Activated CD4-positive, alpha-beta memory T cell treated with anti-CD3 and anti-CD28 coated beads for 36 hours (primary cell): ENCODE measurements at regions of chr12 and their contacts with region 1.

Region 1: DNA sequence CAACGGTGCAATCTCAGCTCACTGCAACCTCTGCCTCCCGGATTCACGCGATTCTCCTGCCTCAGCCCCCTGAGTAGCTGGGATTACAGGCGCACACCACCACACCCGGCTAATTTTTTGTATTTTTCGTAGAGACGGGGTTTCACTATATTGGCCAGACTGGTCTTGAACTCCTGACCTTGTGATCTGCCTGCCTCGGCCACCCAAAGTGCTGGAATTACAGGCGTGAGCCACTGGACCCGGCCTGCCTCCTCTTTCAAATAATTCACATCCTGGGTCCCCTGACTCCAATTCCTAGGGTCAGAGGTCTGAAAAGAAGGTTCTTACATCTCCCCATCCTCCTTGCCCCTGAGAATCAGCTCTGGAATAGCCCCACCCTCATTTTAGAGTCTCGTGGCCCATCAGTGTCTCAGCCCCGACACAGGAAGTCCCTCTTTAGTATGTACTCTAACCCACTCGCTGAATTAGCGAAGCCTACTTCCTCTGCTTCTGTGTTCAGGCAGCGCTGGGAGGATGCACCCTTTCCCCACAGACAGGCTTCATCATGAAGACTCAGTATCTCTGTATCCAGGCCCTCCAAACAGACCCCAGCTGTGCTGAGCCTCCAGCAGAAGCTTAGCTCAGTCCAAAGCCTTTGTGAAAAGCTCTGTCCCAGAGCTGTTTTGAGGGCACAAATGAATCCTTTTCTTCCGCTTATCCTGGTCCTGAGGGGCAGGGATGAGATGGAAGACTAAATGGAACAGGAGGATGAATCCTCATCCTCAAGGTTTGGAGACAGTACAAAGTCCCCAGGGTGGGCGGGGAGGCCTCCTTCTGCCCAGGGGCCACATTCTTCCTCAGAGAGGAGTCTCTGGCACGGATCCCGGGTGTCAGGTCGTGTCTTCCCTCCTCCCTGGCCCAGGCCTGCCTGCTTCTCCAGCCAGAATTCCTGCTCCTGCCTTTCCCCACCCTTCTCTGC is 3.5 kb downstream of the LPAR5 start:
- DNase-seq: peak; percentile 69
- H3K4me3 Mint-ChIP-seq: peak overlapping the region; percentile 73
- H3K27ac Mint-ChIP-seq: peak overlapping the region; percentile 91
- H3K4me1 Mint-ChIP-seq: peaks cover 53% of the 10 kb centered on the region
- H3K27me3 Mint-ChIP-seq: no peaks in the 10 kb centered on the region

Region 2: GRCh38 chr12:6553051-6553868 is 79.0 kb before region 1 on chr12:
- CTCF ChIA-PET with region 1: no interaction called
- POLR2A ChIA-PET with region 1: no interaction called
- intact Hi-C with region 1: no loop called
- DNase-seq: no peak
- H3K4me3 Mint-ChIP-seq: peak overlapping the region; percentile 48
- H3K27ac Mint-ChIP-seq: no peak overlapping the region
- H3K4me1 Mint-ChIP-seq: peaks cover 38% of the 10 kb centered on the region
- H3K27me3 Mint-ChIP-seq: no peaks in the 10 kb centered on the region

Region 3: DNA sequence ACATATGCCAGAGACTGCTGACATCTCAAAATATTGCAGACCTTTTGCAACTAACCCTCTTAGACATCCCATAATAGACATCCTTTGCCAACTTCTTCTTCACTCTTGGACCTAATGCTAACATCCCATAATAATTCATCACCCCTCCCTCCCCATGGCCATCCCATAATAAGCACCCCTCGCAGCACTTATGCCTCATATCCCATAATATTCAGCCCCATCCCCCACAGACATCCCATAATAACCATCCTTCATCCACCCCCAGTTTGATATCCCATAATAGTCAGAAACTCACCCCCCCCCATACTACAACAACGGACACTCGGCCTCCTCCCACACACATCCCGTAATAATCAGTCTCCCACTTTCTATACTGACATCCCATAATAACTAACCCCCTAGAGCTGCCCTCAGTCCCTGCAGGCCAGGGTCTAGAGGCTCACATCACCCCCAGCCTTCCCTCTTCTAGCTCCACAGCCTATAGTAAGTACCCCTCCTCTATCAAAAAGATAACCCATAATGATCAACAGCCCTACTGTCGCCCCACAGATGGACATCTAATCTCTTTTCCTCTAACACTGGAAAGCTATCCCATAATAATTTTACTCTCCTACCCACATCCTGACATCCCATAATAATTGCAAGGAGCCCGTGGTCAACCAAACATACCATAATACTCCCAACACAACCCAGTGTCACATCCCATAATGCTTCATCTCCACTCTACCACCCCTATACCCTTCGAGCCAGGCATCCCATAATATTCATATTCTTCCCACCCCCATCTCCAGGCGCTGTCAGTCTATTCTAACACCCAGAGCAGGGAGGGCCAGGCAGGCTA is 24.3 kb before region 1 on chr12:
- CTCF ChIA-PET with region 1: interaction called, 4 read pairs
- POLR2A ChIA-PET with region 1: interaction called, 3 read pairs
- intact Hi-C with region 1: loop called (anchors 2 kb)
- DNase-seq: peak; percentile 82
- H3K4me3 Mint-ChIP-seq: no peak overlapping the region
- H3K27ac Mint-ChIP-seq: no peak overlapping the region
- H3K4me1 Mint-ChIP-seq: peaks cover 53% of the 10 kb centered on the region
- H3K27me3 Mint-ChIP-seq: no peaks in the 10 kb centered on the region

Region 4: GRCh38 chr12:6613776-6614512 is 18.4 kb before region 1 on chr12:
- CTCF ChIA-PET with region 1: interaction called, 5 read pairs
- POLR2A ChIA-PET with region 1: no interaction called
- intact Hi-C with region 1: loop called (anchors 2 kb)
- DNase-seq: peak; percentile 45
- H3K4me3 Mint-ChIP-seq: no peak overlapping the region
- H3K27ac Mint-ChIP-seq: peak overlapping the region; percentile 38
- H3K4me1 Mint-ChIP-seq: peaks cover 38% of the 10 kb centered on the region
- H3K27me3 Mint-ChIP-seq: no peaks in the 10 kb centered on the region

Region 5: DNA sequence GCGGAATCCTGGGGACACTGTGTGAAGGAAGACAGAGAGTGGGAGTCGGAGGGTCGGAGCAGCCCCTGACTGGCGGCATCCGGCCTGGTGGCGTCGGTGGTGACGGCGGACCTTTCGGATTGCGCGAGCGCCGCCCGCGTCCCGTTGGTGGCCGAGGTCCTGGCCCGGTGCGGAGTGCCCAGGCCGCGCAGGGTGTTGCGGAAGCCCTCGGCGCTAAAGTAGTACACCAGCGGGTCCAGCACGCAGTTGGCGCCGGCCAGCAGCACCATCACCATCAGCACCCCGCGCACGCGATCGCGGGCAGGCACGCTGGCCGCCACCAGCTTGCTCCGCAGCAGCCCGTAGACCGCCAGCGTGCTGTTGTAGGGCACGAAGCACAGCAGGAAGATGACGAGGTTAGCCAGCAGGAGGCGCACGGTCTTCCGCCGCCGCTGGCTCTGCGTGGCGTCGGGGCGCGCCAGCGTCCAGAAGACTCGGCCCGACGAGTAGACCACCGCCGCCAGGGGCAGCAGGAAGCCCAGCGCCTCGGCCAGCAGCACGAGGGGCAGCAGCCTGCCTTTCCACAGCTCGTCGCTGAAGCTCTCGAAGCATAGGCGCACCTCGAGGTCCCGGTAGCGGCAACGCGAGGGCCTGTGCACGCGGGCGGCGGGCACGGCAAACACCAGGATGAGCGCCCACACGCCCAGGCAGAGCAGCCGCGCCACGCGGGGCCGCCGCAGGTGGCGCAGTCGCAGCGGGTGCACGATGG is 12.0 kb before region 1 on chr12:
- CTCF ChIA-PET with region 1: interaction called, 17 read pairs
- POLR2A ChIA-PET with region 1: interaction called, 4 read pairs
- intact Hi-C with region 1: loop called (anchors 2 kb)
- DNase-seq: peak; percentile 68
- H3K4me3 Mint-ChIP-seq: peak overlapping the region; percentile 43
- H3K27ac Mint-ChIP-seq: no peak overlapping the region
- H3K4me1 Mint-ChIP-seq: peaks cover 8% of the 10 kb centered on the region
- H3K27me3 Mint-ChIP-seq: no peaks in the 10 kb centered on the region

Region 6: GRCh38 chr12:6662906-6663742 is 30.8 kb after region 1 on chr12 and contains the start of gene ING4:
- CTCF ChIA-PET with region 1: no interaction called
- POLR2A ChIA-PET with region 1: no interaction called
- intact Hi-C with region 1: loop called (anchors 2 kb)
- DNase-seq: peak; percentile 98
- H3K4me3 Mint-ChIP-seq: peak within 1 kb of the TSS; percentile 91
- H3K27ac Mint-ChIP-seq: peak within 1 kb of the TSS; percentile 83
- H3K4me1 Mint-ChIP-seq: peaks cover 22% of the 10 kb centered on the region
- H3K27me3 Mint-ChIP-seq: no peaks in the 10 kb centered on the region
- total RNA-seq, gene ING4: 13.8 to 15.2 TPM